BJ (cell line): ENCODE measurements at regions of chr17 and their contacts with region 1.

Region 1: DNA sequence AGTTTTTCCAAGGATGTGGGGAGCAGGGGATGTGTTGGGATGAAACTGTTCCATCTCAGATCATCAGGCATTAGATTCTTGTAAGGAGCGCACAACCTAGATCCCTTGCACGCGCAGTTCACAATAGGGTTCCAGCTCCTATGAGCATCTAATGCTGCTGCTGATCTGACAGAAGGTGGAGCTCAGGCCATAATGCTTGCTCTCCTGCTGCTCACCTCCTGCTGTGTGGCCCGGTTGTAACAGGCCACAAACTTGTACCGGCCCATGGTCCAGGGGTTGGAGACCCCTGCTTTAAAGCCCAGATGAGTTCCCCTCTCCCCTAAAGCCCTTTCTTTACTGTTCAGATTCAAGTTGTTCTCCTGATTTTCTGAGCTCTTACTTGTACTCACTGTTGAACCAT is 44.8 kb downstream of the RNF135 start:
- DNase-seq: no peak
- H3K4me3 ChIP-seq: no peak overlapping the region
- H3K27me3 ChIP-seq: no peaks in the 10 kb centered on the region
- CTCF ChIP-seq: no peak

Region 2: GRCh38 chr17:31052187-31052889 is 36.7 kb after region 1 on chr17:
- CTCF ChIA-PET with region 1: no interaction called
- POLR2A ChIA-PET with region 1: no interaction called
- DNase-seq: peak; percentile 98
- H3K4me3 ChIP-seq: no peak overlapping the region
- H3K27me3 ChIP-seq: no peaks in the 10 kb centered on the region
- CTCF ChIP-seq: 0 out of 2 replicates have a peak, but pooled peaks have one; percentile 12

Region 3: GRCh38 chr17:31216053-31216751 is 200.6 kb after region 1 on chr17:
- CTCF ChIA-PET with region 1: interaction called, 33 read pairs
- POLR2A ChIA-PET with region 1: no interaction called
- DNase-seq: peak; percentile 96
- H3K4me3 ChIP-seq: no peak overlapping the region
- H3K27me3 ChIP-seq: no peaks in the 10 kb centered on the region
- CTCF ChIP-seq: peak; percentile 22; the same call in 1 of the 2 replicates